ENCODE measurements at regions of chr14 and their contacts with region 1.

Region 1: GRCh38 chr14:103910262-103910935 is 17.9 kb upstream of the TDRD9 start:
- DNase-seq: peak; percentile 54
- H3K4me3 Mint-ChIP-seq: peak overlapping the region; percentile 2
- H3K27ac Mint-ChIP-seq: peak overlapping the region; percentile 47
- H3K4me1 Mint-ChIP-seq: peaks cover 8% of the 10 kb centered on the region
- H3K27me3 Mint-ChIP-seq: no peaks in the 10 kb centered on the region

Region 2: GRCh38 chr14:103808403-103809001 is 101.9 kb before region 1 on chr14:
- intact Hi-C with region 1: loop called (anchors 2 kb)
- DNase-seq: peak; percentile 49
- H3K4me3 Mint-ChIP-seq: no peak overlapping the region
- H3K27ac Mint-ChIP-seq: no peak overlapping the region
- H3K4me1 Mint-ChIP-seq: peaks cover 9% of the 10 kb centered on the region
- H3K27me3 Mint-ChIP-seq: no peaks in the 10 kb centered on the region

Region 3: DNA sequence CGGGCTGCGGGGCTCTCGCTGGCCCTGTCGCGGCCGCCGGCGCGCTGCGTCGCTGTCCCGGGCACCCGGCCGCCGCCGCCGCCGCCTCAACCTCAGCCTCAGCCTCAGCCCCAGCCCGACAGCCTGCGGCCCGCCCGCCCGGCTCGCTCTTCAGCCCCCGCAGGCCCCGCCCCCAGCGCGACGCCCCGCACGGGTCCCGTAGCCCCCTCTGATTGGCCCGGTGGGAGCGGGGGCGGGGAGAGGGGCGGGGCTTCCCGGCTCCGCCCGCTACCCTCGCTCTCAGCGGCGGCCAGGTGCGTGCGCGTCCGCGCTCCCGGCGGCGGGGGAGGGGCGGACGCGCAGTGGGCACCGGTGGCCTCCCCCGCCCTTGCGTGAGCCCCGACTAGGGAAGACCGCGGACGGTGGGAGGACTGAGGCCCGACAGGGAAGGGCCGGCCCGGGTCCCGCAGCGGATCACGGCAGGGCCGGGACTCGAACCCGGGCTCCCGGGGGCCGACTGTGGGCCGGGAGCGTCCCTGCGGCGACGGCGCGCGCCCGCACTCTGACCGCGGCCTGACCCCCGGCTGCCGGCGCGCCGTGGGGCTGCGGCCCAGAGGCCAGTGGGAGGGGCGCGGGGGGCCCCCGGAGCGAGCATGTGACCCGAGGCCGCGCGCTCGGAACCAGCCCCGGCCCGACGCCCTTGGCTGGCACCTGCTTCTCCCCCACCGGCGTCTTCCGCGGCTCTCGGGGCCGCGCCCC is 62.8 kb before region 1 on chr14 and contains the start of gene PPP1R13B:
- intact Hi-C with region 1: loop called (anchors 2 kb)
- DNase-seq: peak; percentile 85
- H3K4me3 Mint-ChIP-seq: peak within 1 kb of the TSS; percentile 81
- H3K27ac Mint-ChIP-seq: peak within 1 kb of the TSS; percentile 46
- H3K4me1 Mint-ChIP-seq: peaks cover 9% of the 10 kb centered on the region
- H3K27me3 Mint-ChIP-seq: peaks cover 29% of the 10 kb centered on the region
- total RNA-seq, gene PPP1R13B: 7.8 and 13.5 TPM in 2 replicates

Region 4: DNA sequence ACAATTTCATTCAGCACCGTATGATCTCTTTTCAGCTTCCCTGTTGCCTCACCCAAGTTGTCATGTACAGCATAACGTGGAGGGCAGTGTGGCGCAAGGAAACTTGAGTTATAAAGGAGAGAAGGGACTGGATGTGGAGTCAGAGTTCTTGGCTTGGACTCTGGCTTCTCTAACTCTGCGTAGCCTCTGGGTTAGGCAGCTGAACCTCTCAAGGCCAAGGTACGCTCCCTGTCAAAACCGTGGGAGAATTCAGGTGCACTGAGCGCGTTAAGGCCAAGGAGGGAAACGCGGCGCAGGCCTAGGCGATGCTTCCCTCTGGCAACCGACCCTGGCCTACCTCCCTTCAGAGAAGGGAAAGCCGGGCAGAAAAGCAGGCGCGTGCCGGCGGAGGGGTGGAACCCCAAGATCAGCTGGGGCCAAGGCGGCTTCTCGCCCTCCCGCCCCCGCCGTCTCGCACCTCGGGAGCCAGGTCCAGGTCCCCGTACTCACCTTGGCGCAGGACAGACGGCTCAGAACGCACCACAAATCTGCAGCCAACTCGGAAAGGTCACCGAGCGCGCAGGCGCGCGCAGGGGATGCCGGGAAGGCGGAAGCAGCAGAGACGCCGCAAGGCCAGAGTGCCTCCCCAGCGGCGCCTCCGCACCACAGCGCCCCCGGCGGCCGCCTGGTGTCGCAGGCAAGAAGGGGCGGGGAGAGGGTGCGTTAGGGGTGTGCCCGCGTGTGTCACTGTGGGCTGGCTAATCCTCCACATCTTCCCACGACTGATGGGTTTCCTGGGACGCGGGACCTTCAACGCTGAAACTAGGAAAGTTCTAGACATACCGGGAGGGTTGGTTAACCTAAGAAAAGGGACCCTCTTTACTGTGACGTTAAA is 10.8 kb after region 1 on chr14:
- intact Hi-C with region 1: loop called (anchors 1 kb)
- DNase-seq: peak; percentile 94
- H3K4me3 Mint-ChIP-seq: peak overlapping the region; percentile 93
- H3K27ac Mint-ChIP-seq: peak overlapping the region; percentile 68
- H3K4me1 Mint-ChIP-seq: peaks cover 7% of the 10 kb centered on the region
- H3K27me3 Mint-ChIP-seq: peaks cover 5% of the 10 kb centered on the region